Tibial artery (tissue), 4 donors: ENCODE measurements at regions of chr12 and their contacts with region 1.

Region 1: DNA sequence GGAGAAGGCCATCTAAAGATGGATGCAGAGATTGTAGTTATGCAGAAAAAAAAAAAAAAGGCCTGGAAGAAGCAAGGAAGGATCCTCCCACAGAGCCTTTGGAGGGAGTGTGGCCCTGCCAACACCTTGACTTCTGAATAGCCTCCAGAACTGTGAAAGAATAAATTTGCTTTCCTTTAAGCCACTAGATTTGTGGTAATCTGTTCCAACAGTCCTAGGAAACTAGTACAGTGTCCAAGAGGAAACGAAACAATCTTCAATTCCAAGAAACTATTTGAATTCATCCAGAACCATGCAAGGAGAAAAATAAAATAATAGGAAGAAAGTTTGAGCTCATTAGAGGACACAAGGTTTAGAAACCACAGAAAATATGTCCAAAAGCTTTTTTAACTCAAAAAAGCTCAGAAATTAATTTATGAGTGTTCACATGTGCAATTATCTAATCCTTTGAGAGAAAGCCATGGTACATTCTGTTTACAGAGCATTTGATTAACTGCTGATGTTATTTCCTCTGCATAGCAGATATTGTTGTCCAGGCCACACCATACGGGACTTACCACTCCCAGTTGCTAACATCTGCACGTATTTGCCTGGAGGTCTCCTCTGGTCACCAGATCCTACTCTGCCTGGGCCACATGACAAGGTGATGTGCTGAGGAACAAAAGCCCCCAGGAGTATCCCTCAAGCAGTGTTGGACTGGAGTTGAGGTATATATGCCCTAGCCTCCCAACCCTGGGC is 30.0 kb upstream of the STAB2 start:
- DNase-seq: peak in 1 of 2 donors; percentile 60
- H3K4me3 ChIP-seq: no peak overlapping the region
- H3K27ac ChIP-seq: no peak overlapping the region
- H3K4me1 ChIP-seq: no peaks in the 10 kb centered on the region
- H3K27me3 ChIP-seq: peaks cover 0 to 4% of the 10 kb centered on the region in 2 donors
- CTCF ChIP-seq: no peak

Region 2: DNA sequence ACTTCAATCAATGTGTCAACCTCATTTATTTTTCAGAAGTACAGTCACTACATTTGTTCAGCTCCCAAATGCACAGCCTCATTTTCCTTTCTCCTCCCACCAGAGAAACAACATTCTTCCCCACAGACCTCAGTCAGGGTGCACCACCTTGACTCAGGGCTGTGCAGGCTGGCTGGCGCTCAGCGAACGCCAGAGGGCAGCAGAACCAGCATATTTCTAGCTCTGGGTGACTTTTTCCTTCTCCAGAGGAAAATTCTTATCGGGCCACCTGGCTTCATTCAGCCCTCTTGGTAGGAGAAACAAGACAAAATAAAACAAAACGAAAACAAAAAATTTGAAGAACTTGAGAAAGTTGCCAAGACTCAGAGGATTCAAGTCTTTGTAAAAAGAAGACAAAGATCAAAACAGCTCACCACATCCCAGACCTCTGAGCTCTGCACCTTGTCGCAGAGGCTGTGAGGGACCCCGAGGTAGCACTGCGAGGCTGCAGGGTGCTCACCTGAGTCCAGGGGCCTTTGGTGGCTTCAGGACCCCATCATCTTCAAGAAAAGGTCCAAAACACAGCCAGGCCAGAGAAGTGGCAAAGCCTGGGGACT is 673.8 kb before region 1 on chr12:
- intact Hi-C with region 1: loop called (anchors 10 kb)
- DNase-seq: peak in 1 of 2 donors; percentile 38
- H3K4me3 ChIP-seq: no peak overlapping the region
- H3K27ac ChIP-seq: no peak overlapping the region
- H3K4me1 ChIP-seq: no peaks in the 10 kb centered on the region
- H3K27me3 ChIP-seq: peaks cover 0 to 12% of the 10 kb centered on the region in 2 donors
- CTCF ChIP-seq: peak in 1 of 2 experiments; percentile 50

Region 3: DNA sequence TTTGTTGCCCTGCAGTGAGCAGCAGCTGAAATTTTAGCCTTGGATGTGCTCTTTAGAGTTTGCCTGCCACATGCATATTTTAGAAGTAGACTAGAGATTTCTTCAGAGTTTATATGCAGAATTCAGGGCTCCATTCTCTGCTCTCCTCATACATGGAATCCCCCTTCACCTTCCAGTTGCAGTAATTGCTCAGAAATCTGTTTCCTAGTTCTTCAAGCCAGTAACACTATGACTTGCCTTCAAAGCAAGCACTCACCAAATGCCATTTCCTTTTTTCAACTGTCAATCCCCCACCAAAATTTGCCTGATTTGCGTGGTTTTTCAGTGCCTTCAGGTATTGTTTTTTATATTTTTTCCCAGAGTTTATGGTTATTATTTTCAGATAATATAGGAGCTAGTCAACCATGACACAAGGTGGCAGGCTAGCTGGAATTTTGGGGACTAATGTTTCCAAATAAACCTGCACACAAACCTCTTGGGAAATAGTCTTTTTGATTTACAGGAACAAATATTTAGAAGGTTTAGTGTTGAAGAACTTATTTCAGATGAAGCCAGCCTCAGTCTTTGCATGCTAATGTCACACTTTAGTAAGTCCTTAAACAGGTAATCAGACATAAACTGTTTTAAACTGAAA is 520.4 kb before region 1 on chr12:
- intact Hi-C with region 1: no loop called
- DNase-seq: no peak
- H3K4me3 ChIP-seq: no peak overlapping the region
- H3K27ac ChIP-seq: no peak overlapping the region
- H3K4me1 ChIP-seq: no peaks in the 10 kb centered on the region
- H3K27me3 ChIP-seq: no peaks in the 10 kb centered on the region
- CTCF ChIP-seq: no peak